Activated naive CD4-positive, alpha-beta T cell treated with anti-CD3 and anti-CD28 coated beads for 36 hours (primary cell): ENCODE measurements at regions of chr19 and their contacts with region 1.

Region 1: GRCh38 chr19:45092747-45093678 is at the start of gene PPP1R37:
- DNase-seq: peak; percentile 95
- H3K4me3 Mint-ChIP-seq: peak within 1 kb of the TSS; percentile 93
- H3K27ac Mint-ChIP-seq: peak within 1 kb of the TSS; percentile 98
- H3K4me1 Mint-ChIP-seq: peaks cover 50% of the 10 kb centered on the region
- H3K27me3 Mint-ChIP-seq: no peaks in the 10 kb centered on the region
- total RNA-seq, gene PPP1R37: 10.2 to 10.3 TPM

Region 2: GRCh38 chr19:44954824-44955586 is 138.0 kb before region 1 on chr19 and contains the start of gene CLPTM1:
- CTCF ChIA-PET with region 1: no interaction called
- intact Hi-C with region 1: loop called (anchors 1 kb)
- DNase-seq: peak; percentile 98
- H3K4me3 Mint-ChIP-seq: peak within 1 kb of the TSS; percentile 98
- H3K27ac Mint-ChIP-seq: peak within 1 kb of the TSS; percentile 98
- H3K4me1 Mint-ChIP-seq: peaks cover 48% of the 10 kb centered on the region
- H3K27me3 Mint-ChIP-seq: no peaks in the 10 kb centered on the region
- total RNA-seq, gene CLPTM1: 32.4 to 34.6 TPM

Region 3: GRCh38 chr19:45117669-45118068 is 24.7 kb after region 1 on chr19:
- CTCF ChIA-PET with region 1: interaction called, 5 read pairs
- intact Hi-C with region 1: loop called (anchors 2 kb)
- DNase-seq: no peak
- H3K4me3 Mint-ChIP-seq: no peak overlapping the region
- H3K27ac Mint-ChIP-seq: no peak overlapping the region
- H3K4me1 Mint-ChIP-seq: peaks cover 66% of the 10 kb centered on the region
- H3K27me3 Mint-ChIP-seq: no peaks in the 10 kb centered on the region

Region 4: DNA sequence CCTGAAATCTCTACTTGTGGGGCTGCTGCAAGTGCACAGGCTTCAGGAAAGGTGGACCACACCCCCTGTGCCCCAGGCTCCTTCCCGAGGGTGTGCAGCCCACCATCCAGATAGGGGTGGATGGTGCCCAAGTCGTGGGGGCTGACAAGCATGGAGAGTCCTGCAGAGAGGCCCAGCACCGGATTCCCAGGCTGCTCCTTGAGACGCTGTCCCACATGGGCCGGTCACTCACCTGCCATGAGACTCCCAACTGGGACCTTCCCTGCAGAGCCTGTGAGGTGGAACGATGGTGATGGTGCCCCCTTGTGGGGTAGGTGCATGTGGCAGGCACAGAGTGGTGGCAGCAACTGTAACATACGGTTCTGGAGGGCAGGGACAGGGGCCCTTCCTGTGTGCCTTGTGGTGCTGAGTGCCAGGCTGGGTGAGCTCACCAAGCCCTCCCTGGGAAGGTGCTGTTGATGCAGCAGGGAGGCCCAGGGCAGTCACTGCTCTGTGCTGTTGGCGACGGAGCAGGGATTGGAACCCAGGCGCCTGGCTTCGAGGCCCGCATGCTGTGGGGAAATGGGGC is 33.0 kb after region 1 on chr19:
- CTCF ChIA-PET with region 1: interaction called, 10 read pairs
- intact Hi-C with region 1: no loop called
- DNase-seq: peak; percentile 83
- H3K4me3 Mint-ChIP-seq: no peak overlapping the region
- H3K27ac Mint-ChIP-seq: no peak overlapping the region
- H3K4me1 Mint-ChIP-seq: peaks cover 18% of the 10 kb centered on the region
- H3K27me3 Mint-ChIP-seq: no peaks in the 10 kb centered on the region

Region 5: GRCh38 chr19:45264781-45265317 is 171.8 kb after region 1 on chr19:
- CTCF ChIA-PET with region 1: no interaction called
- intact Hi-C with region 1: no loop called
- DNase-seq: no peak
- H3K4me3 Mint-ChIP-seq: no peak overlapping the region
- H3K27ac Mint-ChIP-seq: no peak overlapping the region
- H3K4me1 Mint-ChIP-seq: no peaks in the 10 kb centered on the region
- H3K27me3 Mint-ChIP-seq: no peaks in the 10 kb centered on the region